ENCODE measurements at regions of chr7 and their contacts with region 1.

Region 1: DNA sequence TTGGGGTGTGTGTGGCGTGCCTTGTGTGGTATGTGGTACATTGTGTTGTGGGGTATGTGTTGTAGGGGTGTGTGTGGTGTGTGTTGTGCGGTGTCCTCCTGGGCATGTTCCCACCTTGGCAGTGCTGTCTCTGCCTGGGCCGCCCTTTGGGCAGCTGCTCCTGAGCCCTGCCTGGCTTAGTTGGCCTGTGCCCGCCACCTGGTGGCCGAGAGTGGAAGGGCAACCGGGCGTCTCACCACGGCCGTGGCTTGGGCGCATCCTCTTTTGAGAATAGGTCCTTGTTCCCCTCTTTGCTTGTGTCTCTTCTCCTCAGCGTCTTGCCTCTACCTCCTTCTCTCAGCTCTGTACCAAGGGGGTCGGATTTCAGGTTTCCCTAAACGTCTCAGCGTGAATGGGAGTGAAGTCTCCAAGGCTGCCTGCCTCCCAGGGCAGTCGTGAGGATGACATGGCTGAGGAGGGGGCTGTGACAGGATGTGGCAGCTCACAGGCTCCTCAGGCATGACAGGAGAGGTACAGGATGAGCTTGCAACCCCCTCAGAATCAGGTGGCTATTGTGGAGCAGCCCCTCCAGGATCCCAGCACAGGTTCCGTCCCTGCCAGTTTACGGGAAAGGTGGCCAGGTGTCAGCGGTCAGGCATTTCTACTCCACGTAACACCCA is 98.4 kb upstream of the PODXL start:
- DNase-seq: peak; percentile 66
- H3K27ac ChIP-seq: no peak overlapping the region
- CTCF ChIP-seq: peak; percentile 84

Region 2: GRCh38 chr7:131507592-131508331 is 147.0 kb before region 1 on chr7:
- CTCF ChIA-PET with region 1: interaction called, 14 read pairs
- POLR2A ChIA-PET with region 1: no interaction called
- DNase-seq: peak; percentile 59
- H3K27ac ChIP-seq: no peak overlapping the region
- CTCF ChIP-seq: peak; percentile 98

Region 3: GRCh38 chr7:131604841-131605279 is 49.9 kb before region 1 on chr7:
- CTCF ChIA-PET with region 1: no interaction called
- POLR2A ChIA-PET with region 1: no interaction called
- DNase-seq: peak; percentile 30
- H3K27ac ChIP-seq: no peak overlapping the region
- CTCF ChIP-seq: no peak

Region 4: GRCh38 chr7:132183781-132184420 is 529.1 kb after region 1 on chr7:
- CTCF ChIA-PET with region 1: no interaction called
- POLR2A ChIA-PET with region 1: no interaction called
- DNase-seq: no peak
- H3K27ac ChIP-seq: no peak overlapping the region
- CTCF ChIP-seq: no peak

Measured in RWPE1 (cell line).